ENCODE measurements at regions of chr9 and their contacts with region 1.

Region 1: GRCh38 chr9:109574068-109574882 is 76.2 kb upstream of the PTPN3 start:
- DNase-seq: peak in 2 of 5 donors; percentile 29 to 51
- ATAC-seq: peak; percentile 71 to 81 (median 74)
- H3K4me3 ChIP-seq: no peak overlapping the region
- H3K27ac ChIP-seq: no peak overlapping the region
- H3K4me1 ChIP-seq: peaks cover 0 to 4% (median 0%) of the 10 kb centered on the region in 12 donors
- H3K27me3 ChIP-seq: no peaks in the 10 kb centered on the region
- CTCF ChIP-seq: peak; percentile 48 to 80 (median 70)
- POLR2A ChIP-seq: no peak

Region 2: GRCh38 chr9:109812818-109813281 is 238.6 kb after region 1 on chr9:
- intact Hi-C with region 1: loop called in 9 of 10 experiments (anchors 2 to 10 kb)
- DNase-seq: no peak
- ATAC-seq: no peak
- H3K4me3 ChIP-seq: no peak overlapping the region
- H3K27ac ChIP-seq: no peak overlapping the region
- H3K4me1 ChIP-seq: peaks cover 0 to 42% (median 16%) of the 10 kb centered on the region in 12 donors
- H3K27me3 ChIP-seq: no peaks in the 10 kb centered on the region
- CTCF ChIP-seq: no peak
- POLR2A ChIP-seq: no peak

Region 3: DNA sequence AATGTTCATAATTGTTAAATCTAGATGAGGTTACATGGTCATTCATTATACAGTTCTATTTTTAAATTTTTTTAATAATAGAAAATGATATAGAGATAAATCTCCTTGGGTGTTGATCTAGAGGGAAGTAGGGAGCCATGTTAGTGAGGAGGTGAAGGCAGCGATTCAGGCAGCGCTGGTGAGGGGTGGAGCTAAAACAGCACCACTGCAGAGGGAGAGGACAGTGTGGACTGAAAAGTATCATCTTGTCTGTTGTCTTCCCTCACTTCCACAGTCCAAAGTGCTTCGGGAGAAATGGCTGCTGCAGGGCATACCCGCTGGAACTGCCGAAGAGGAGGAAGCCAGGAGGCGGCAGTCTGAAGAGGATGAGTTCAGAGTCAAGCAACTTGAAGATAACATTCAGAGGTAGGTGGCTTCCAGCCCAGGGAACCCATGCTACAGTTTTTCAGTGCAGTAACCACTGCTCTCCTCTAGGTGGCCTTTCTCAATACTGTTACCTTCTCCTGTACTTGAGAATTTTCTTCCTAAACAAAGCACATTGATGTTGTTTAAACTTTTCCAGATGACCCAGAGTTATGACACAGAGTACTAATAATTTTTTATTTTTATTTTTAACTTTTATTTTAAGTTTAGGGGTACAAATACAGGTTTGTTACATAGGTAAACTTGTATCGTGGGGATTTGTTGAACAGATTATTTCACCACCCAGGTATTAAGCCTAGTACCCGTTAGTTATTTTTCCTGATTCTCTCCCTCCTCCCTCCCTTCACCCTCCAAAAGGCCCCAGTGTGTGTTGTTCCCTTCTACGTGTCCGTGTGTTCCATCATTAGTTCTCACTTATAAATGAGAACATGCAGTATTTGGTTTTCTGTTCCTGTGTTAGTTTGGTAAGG is 306.2 kb after region 1 on chr9:
- intact Hi-C with region 1: loop called in 6 of 10 experiments (anchors 5 to 10 kb)
- DNase-seq: no peak
- ATAC-seq: no peak
- H3K4me3 ChIP-seq: no peak overlapping the region
- H3K27ac ChIP-seq: no peak overlapping the region
- H3K4me1 ChIP-seq: peaks cover 0 to 20% (median 8%) of the 10 kb centered on the region in 12 donors
- H3K27me3 ChIP-seq: no peaks in the 10 kb centered on the region
- CTCF ChIP-seq: peak; percentile 38 to 67 (median 56)
- POLR2A ChIP-seq: no peak

Region 4: DNA sequence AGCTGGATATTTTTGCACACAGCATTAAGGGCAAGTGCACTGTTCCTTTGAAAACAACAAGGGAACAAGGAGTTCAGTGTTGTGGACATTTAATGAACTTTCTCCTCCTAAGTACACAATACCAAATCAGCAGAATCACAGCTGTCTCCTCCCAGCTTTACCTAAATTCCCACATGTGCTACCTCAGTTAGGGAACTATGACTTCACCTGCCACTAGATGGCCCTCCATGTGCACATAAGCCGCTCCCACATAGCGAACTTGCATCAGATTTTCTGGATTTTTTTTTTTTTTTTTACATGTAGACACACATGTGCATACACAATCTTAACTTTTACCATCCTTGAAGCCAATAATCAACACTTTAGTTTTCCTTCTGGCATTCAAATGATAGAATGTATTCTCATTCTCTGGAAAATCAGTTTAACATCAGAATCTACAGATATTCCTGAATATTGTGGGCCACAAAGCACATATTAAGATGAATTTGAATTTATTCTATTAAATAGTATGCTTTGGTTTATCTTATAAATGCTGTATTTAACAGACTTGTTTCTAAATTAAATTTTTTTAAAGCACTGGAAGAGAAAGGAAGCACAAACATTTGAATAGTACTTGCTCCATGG is 329.4 kb after region 1 on chr9:
- intact Hi-C with region 1: loop called in 4 of 10 experiments (anchors 10 kb)
- DNase-seq: peak in 4 of 5 donors; percentile 47 to 64 (median 60)
- ATAC-seq: peak; percentile 24 to 66 (median 42)
- H3K4me3 ChIP-seq: no peak overlapping the region
- H3K27ac ChIP-seq: peak overlapping the region in 1 of 12 donors; percentile 3
- H3K4me1 ChIP-seq: peaks cover 9 to 68% (median 29%) of the 10 kb centered on the region in 12 donors
- H3K27me3 ChIP-seq: no peaks in the 10 kb centered on the region
- CTCF ChIP-seq: peak; percentile 63 to 90 (median 82)
- POLR2A ChIP-seq: no peak

Region 5: DNA sequence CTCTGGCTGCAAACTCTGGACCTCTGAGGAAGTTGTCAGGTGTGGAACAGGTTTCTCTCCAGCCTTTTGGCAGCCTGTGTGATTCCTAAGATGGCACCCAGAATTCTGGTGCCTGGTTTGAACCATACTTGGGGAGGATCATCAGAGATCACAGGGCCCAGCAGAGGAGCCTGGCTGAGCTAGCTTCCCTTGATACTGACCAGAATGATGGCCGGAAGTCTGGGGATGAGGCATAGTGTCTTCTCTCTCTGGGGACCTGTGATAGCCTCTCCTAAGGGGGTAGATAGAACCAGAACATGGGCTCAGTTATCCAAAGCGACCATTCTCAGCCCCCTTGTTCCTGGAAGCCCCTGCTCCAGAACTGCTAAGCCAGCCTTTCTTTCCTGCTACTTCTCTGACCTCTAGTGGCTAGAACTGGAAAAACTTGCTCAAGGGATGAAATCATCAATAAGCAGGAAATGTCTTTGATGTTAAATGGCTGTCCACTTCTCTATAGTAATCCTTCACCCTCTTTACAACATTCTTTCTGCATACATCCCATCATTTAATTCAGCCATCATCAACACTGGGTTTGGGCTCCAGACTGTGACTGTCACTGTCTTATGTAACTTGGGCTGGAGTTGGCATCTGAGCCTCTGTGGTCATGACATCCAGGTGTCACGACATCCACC is 578.6 kb after region 1 on chr9:
- intact Hi-C with region 1: loop called in 2 of 10 experiments (anchors 5 to 10 kb)
- DNase-seq: no peak
- ATAC-seq: peak in 3 of 4 donors; percentile 4 to 29 (median 22)
- H3K4me3 ChIP-seq: no peak overlapping the region
- H3K27ac ChIP-seq: peak overlapping the region in 4 of 12 donors; percentile 12 to 58 (median 37)
- H3K4me1 ChIP-seq: peaks cover 29 to 100% (median 88%) of the 10 kb centered on the region in 12 donors
- H3K27me3 ChIP-seq: no peaks in the 10 kb centered on the region
- CTCF ChIP-seq: peak; percentile 54 to 79 (median 72)
- POLR2A ChIP-seq: no peak

Region 6: GRCh38 chr9:110623462-110624025 is 1049.3 kb after region 1 on chr9:
- intact Hi-C with region 1: loop called in 3 of 10 experiments (anchors 10 kb)
- DNase-seq: no peak
- ATAC-seq: peak in 2 of 4 donors; percentile 38 to 39
- H3K4me3 ChIP-seq: no peak overlapping the region
- H3K27ac ChIP-seq: no peak overlapping the region
- H3K4me1 ChIP-seq: no peaks in the 10 kb centered on the region
- H3K27me3 ChIP-seq: no peaks in the 10 kb centered on the region
- CTCF ChIP-seq: peak; percentile 44 to 80 (median 68)
- POLR2A ChIP-seq: no peak